MCF 10A (cell line): ENCODE measurements at regions of chr7 and their contacts with region 1.

Region 1: DNA sequence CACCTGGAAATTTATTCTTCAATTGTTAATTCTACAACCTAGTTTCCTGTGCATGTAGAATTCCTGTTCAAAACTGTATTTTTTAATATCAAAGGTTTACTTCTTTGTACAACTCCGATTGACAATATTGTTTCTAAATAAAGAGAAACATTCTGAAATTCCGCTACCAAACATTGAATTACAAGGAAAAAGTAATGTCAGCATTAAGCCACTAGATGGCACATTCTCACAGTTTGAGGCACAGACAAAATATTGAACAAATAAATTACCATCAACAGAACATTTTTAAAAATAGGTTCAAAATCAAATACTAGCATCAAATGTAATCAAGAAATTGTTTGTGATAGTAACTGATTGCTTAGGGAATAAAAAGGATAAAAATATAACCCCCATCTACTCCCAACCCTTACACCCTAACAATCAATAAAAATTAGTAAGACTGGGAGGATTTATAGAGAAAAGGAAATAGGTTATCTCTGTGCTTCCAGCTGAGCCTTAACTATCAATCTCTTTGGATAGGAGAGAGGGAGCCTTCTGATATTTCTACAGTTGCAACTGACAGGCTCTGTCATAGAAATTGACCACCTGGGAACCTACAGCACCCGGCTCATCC is 86.6 kb upstream of the C7orf33 start:
- DNase-seq: peak; percentile 42
- H3K4me3 Mint-ChIP-seq: no peak overlapping the region
- H3K27ac Mint-ChIP-seq: no peak overlapping the region
- H3K4me1 Mint-ChIP-seq: peaks cover 4% of the 10 kb centered on the region
- H3K27me3 Mint-ChIP-seq: peaks cover 22% of the 10 kb centered on the region
- CTCF ChIP-seq: peak; percentile 56

Region 2: DNA sequence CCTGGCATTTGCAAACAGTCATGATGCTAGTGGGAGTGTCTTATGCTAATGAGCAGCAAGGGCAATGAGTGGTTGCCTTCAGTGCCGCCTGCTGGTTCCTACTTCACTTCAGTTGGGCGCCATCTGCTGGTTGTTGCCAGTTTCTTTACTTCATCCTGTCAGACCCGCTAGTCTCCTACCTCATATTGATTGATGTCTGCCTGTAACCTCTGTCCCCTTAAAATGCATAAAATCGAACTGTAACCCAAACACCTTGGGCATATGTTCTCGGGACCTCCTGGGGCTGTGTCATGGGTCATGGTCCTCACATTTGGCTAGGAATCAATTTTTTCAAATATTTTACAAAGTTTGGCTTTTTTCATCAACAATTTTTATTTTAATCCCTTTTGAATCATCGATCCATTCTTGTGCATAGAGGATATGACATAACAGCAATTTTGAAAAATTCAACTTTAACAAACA is 23.8 kb after region 1 on chr7:
- CTCF ChIA-PET with region 1: interaction called, 4 read pairs
- POLR2A ChIA-PET with region 1: interaction called, 3 read pairs
- intact Hi-C with region 1: loop called (anchors 1 kb)
- DNase-seq: peak; percentile 92
- H3K4me3 Mint-ChIP-seq: no peak overlapping the region
- H3K27ac Mint-ChIP-seq: no peak overlapping the region
- H3K4me1 Mint-ChIP-seq: no peaks in the 10 kb centered on the region
- H3K27me3 Mint-ChIP-seq: peaks cover 42% of the 10 kb centered on the region
- CTCF ChIP-seq: peak; percentile 60

Region 3: GRCh38 chr7:149239345-149240191 is 735.6 kb after region 1 on chr7 and contains the start of gene ZNF212:
- CTCF ChIA-PET with region 1: no interaction called
- POLR2A ChIA-PET with region 1: no interaction called
- intact Hi-C with region 1: no loop called
- DNase-seq: peak; percentile 92
- H3K4me3 Mint-ChIP-seq: peak within 1 kb of the TSS; percentile 81
- H3K27ac Mint-ChIP-seq: peak within 1 kb of the TSS; percentile 83
- H3K4me1 Mint-ChIP-seq: peaks cover 17% of the 10 kb centered on the region
- H3K27me3 Mint-ChIP-seq: no peaks in the 10 kb centered on the region
- CTCF ChIP-seq: peak; percentile 73
- total RNA-seq, gene ZNF212: 10.5 and 14.7 TPM in 2 replicates